ENCODE measurements at regions of chr20 and their contacts with region 1.

Region 1: DNA sequence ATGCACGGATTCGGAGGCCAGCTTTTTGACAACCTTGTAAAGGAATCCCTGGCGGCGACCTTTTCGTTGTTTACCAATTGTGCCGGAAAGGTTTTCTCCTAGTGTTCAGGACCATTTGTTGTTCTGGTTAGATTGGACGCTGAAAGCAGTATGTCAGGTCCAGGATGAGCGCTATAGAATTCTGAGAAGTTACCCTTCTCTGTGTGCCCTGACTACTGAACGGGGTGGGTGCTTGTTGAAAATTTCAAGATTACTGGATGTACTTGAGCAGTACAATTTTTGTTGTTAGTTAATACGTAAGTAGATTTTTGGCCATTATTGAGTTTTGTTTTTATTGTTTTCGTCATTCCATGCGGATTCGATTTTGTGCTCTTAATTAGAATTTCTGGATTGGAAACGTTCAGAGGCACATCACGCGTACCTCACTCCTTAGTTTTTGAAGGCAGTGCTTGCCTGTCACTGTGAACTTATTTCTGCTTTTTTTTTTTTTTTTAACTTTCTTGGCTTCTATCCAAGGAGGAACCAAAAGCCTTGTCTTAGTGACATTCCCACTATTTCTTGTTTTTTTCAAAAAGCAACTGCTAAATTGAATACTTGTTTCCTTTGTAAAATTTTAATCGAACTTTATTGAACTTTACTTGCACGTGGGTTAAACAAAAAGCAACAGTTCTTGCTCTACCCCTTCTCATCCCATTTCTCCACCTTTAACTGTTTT is 898 bp downstream of the XRN2 start:
- DNase-seq: no peak
- ATAC-seq: peak; percentile 18
- H3K4me3 ChIP-seq: peak overlapping the region; percentile 81 to 95
- H3K27ac ChIP-seq: peak overlapping the region; percentile 97
- H3K4me1 ChIP-seq: peaks cover 11% of the 10 kb centered on the region
- H3K27me3 ChIP-seq: no peaks in the 10 kb centered on the region
- CTCF ChIP-seq: no peak

Region 2: DNA sequence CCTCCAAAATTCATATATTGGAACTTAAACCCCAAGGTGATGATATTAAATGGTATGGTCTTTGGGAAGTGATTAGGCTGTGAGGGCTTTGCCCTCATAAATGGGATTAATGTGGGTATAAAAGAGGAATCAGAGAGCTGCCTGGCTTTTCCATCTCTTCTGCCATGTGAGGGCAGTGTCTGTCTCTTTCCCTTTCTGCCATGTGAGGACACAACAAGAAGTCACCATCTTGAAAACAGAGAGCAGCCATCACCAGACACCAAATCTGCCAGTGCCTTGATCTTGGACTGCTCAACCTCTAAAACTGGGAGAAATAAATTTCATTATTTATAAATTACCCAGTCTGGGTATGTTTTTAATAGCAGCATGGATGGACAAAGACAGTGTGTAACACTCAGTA is 664.5 kb after region 1 on chr20:
- CTCF ChIA-PET with region 1: no interaction called
- POLR2A ChIA-PET with region 1: interaction called, 10 read pairs
- in situ Hi-C with region 1: no loop called
- intact Hi-C with region 1: no loop called
- DNase-seq: no peak
- ATAC-seq: no peak
- H3K4me3 ChIP-seq: no peak overlapping the region
- H3K27ac ChIP-seq: no peak overlapping the region
- H3K4me1 ChIP-seq: no peaks in the 10 kb centered on the region
- H3K27me3 ChIP-seq: no peaks in the 10 kb centered on the region
- CTCF ChIP-seq: no peak